CD4-positive, alpha-beta memory T cell (primary cell): ENCODE measurements at regions of chr10 and their contacts with region 1.

Region 1: GRCh38 chr10:100912605-100913469 is at the start of gene SLF2:
- DNase-seq: peak; percentile 89 to 92 (median 90)
- H3K4me3 ChIP-seq: peak within 1 kb of the TSS; percentile 52 to 70
- H3K4me3 Mint-ChIP-seq: peak within 1 kb of the TSS; percentile 91 to 100 (median 99)
- H3K27ac ChIP-seq: peak within 1 kb of the TSS; percentile 82
- H3K27ac Mint-ChIP-seq: peak within 1 kb of the TSS; percentile 90 to 99 (median 99)
- H3K4me1 ChIP-seq: peaks cover 27% of the 10 kb centered on the region
- H3K4me1 Mint-ChIP-seq: peaks cover 29 to 53% (median 41%) of the 10 kb centered on the region in 4 donors
- H3K27me3 ChIP-seq: no peaks in the 10 kb centered on the region
- H3K27me3 Mint-ChIP-seq: no peaks in the 10 kb centered on the region
- total RNA-seq, gene SLF2: 46.3 to 49.3 TPM

Region 2: GRCh38 chr10:100535715-100536353 is 377.0 kb before region 1 on chr10 and contains the start of gene HIF1AN:
- CTCF ChIA-PET with region 1: interaction called, 3 read pairs
- POLR2A ChIA-PET with region 1: interaction called, 9 read pairs
- intact Hi-C with region 1: loop called (anchors 2 kb)
- DNase-seq: peak; percentile 92 to 95 (median 94)
- H3K4me3 ChIP-seq: peak within 1 kb of the TSS; percentile 48 to 69
- H3K4me3 Mint-ChIP-seq: peak within 1 kb of the TSS in 1 of 8 donors; percentile 40
- H3K27ac ChIP-seq: peak within 1 kb of the TSS; percentile 77
- H3K27ac Mint-ChIP-seq: peak within 1 kb of the TSS in 3 of 7 donors; percentile 8 to 87 (median 32)
- H3K4me1 ChIP-seq: peaks cover 34% of the 10 kb centered on the region
- H3K4me1 Mint-ChIP-seq: peaks cover 12 to 23% (median 18%) of the 10 kb centered on the region in 4 donors
- H3K27me3 ChIP-seq: no peaks in the 10 kb centered on the region
- H3K27me3 Mint-ChIP-seq: no peaks in the 10 kb centered on the region
- total RNA-seq, gene HIF1AN: 69.6 to 69.8 TPM

Region 3: GRCh38 chr10:100562008-100562711 is 350.7 kb before region 1 on chr10:
- CTCF ChIA-PET with region 1: no interaction called
- POLR2A ChIA-PET with region 1: interaction called, 3 read pairs
- intact Hi-C with region 1: loop called (anchors 10 kb)
- DNase-seq: peak; percentile 77 to 79 (median 79)
- H3K4me3 ChIP-seq: no peak overlapping the region
- H3K4me3 Mint-ChIP-seq: peak overlapping the region; percentile 7 to 71 (median 58)
- H3K27ac ChIP-seq: no peak overlapping the region
- H3K27ac Mint-ChIP-seq: no peak overlapping the region
- H3K4me1 ChIP-seq: peaks cover 17% of the 10 kb centered on the region
- H3K4me1 Mint-ChIP-seq: peaks cover 14 to 22% (median 16%) of the 10 kb centered on the region in 4 donors
- H3K27me3 ChIP-seq: no peaks in the 10 kb centered on the region
- H3K27me3 Mint-ChIP-seq: peaks cover 26 to 43% of the 10 kb centered on the region in 2 donors

Region 4: DNA sequence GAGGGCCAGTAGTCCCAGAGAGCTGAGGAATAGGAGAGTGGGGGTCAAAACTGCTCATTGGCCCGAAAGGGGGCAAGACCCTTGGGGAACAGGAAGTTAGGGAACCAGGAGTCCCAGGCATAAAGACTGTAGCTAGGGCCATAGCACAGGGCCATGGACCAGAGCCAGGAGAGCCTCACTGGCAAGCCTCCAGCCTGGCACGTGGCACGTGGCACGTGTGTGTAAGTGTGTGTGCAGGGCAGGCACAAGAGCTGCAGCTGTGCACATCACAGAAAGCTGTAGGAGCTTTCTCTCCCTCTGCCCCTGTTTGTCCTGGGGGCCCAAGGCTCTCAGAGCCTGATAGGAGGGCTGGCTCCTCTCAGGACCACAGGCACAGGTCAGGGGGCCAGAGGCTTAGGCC is 47.9 kb before region 1 on chr10:
- CTCF ChIA-PET with region 1: no interaction called
- POLR2A ChIA-PET with region 1: no interaction called
- intact Hi-C with region 1: no loop called
- DNase-seq: no peak
- H3K4me3 ChIP-seq: no peak overlapping the region
- H3K4me3 Mint-ChIP-seq: no peak overlapping the region
- H3K27ac ChIP-seq: no peak overlapping the region
- H3K27ac Mint-ChIP-seq: no peak overlapping the region
- H3K4me1 ChIP-seq: no peaks in the 10 kb centered on the region
- H3K4me1 Mint-ChIP-seq: peaks cover 0 to 6% (median 3%) of the 10 kb centered on the region in 4 donors
- H3K27me3 ChIP-seq: peaks cover 4% of the 10 kb centered on the region
- H3K27me3 Mint-ChIP-seq: peaks cover 32 to 37% of the 10 kb centered on the region in 2 donors

Region 5: GRCh38 chr10:100986952-100987750 is 74.3 kb after region 1 on chr10 and contains the starts of genes MRPL43 and TWNK:
- CTCF ChIA-PET with region 1: no interaction called
- POLR2A ChIA-PET with region 1: interaction called, 7 read pairs
- intact Hi-C with region 1: loop called (anchors 2 kb)
- DNase-seq: peak; percentile 83 to 90 (median 86)
- H3K4me3 ChIP-seq: peak within 1 kb of the TSS; percentile 67 to 91
- H3K4me3 Mint-ChIP-seq: peak within 1 kb of the TSS; percentile 85 to 98 (median 94)
- H3K27ac ChIP-seq: peak within 1 kb of the TSS; percentile 71
- H3K27ac Mint-ChIP-seq: peak within 1 kb of the TSS; percentile 41 to 97 (median 92)
- H3K4me1 ChIP-seq: peaks cover 25% of the 10 kb centered on the region
- H3K4me1 Mint-ChIP-seq: peaks cover 16 to 44% (median 32%) of the 10 kb centered on the region in 4 donors
- H3K27me3 ChIP-seq: no peaks in the 10 kb centered on the region
- H3K27me3 Mint-ChIP-seq: no peaks in the 10 kb centered on the region
- total RNA-seq, gene MRPL43: 65.8 to 71.6 TPM
- total RNA-seq, gene TWNK: 11.5 to 14.3 TPM

Region 6: GRCh38 chr10:101012525-101013364 is 99.9 kb after region 1 on chr10:
- CTCF ChIA-PET with region 1: interaction called, 3 read pairs
- POLR2A ChIA-PET with region 1: no interaction called
- intact Hi-C with region 1: loop called (anchors 5 kb)
- DNase-seq: peak; percentile 51 to 72 (median 65)
- H3K4me3 ChIP-seq: no peak overlapping the region
- H3K4me3 Mint-ChIP-seq: no peak overlapping the region
- H3K27ac ChIP-seq: no peak overlapping the region
- H3K27ac Mint-ChIP-seq: peak overlapping the region in 3 of 7 donors; percentile 2 to 67 (median 61)
- H3K4me1 ChIP-seq: peaks cover 19% of the 10 kb centered on the region
- H3K4me1 Mint-ChIP-seq: peaks cover 10 to 15% (median 13%) of the 10 kb centered on the region in 4 donors
- H3K27me3 ChIP-seq: peaks cover 11% of the 10 kb centered on the region
- H3K27me3 Mint-ChIP-seq: peaks cover 20 to 23% of the 10 kb centered on the region in 2 donors

Region 7: DNA sequence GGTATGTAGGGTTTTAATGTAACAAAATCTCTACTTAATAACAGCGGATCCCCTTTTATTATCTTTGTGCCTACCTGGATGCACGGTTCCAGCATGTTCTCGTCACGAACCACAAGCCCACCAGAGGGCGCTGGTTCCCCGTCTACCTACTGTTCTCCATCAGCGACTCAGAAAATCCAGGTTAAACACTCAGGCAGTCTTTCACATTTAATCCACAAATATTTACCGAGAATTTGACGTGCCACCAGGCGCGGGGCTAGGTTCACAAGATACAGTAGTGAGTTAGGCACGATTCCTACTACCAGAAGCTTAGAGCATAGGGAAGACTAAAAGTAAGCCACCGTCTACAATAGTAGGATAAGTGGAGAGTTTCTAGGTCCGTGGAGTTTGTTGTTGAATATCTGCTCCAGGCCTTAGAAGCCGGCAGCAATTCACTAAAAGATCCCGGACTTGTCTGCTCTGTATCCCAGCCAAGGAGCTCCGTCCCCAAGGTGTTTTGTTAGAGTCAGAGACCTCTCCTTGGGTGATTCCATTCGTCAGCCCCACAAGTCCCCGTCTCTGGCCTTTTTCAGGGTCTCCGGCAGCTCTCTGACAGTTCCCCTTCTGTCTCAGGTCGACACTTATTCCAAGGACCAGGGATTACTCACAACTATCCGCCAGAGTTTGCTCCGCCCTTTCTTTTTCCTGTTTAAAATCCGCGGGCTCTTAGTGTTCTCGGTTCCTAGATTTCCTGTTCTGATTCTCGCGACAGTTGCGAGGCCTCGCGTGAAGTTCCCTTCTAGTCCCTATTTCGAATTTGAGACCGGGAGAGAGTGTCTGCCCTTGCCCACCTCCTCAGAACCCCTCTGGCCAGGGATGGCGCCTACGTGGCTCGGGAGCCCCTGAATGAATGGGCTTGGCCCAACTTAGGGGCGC is 147.5 kb after region 1 on chr10:
- CTCF ChIA-PET with region 1: no interaction called
- POLR2A ChIA-PET with region 1: no interaction called
- intact Hi-C with region 1: loop called (anchors 2 kb)
- DNase-seq: peak; percentile 80 to 98 (median 94)
- H3K4me3 ChIP-seq: peak overlapping the region; percentile 99 to 100
- H3K4me3 Mint-ChIP-seq: peak overlapping the region; percentile 92 to 98 (median 95)
- H3K27ac ChIP-seq: peak overlapping the region; percentile 92
- H3K27ac Mint-ChIP-seq: peak overlapping the region; percentile 88 to 99 (median 98)
- H3K4me1 ChIP-seq: peaks cover 28% of the 10 kb centered on the region
- H3K4me1 Mint-ChIP-seq: peaks cover 14 to 35% (median 22%) of the 10 kb centered on the region in 4 donors
- H3K27me3 ChIP-seq: peaks cover 23% of the 10 kb centered on the region
- H3K27me3 Mint-ChIP-seq: peaks cover 14 to 17% of the 10 kb centered on the region in 2 donors